Aorta (tissue), 5 donors: ENCODE measurements at regions of chrX and their contacts with region 1.

Region 1: DNA sequence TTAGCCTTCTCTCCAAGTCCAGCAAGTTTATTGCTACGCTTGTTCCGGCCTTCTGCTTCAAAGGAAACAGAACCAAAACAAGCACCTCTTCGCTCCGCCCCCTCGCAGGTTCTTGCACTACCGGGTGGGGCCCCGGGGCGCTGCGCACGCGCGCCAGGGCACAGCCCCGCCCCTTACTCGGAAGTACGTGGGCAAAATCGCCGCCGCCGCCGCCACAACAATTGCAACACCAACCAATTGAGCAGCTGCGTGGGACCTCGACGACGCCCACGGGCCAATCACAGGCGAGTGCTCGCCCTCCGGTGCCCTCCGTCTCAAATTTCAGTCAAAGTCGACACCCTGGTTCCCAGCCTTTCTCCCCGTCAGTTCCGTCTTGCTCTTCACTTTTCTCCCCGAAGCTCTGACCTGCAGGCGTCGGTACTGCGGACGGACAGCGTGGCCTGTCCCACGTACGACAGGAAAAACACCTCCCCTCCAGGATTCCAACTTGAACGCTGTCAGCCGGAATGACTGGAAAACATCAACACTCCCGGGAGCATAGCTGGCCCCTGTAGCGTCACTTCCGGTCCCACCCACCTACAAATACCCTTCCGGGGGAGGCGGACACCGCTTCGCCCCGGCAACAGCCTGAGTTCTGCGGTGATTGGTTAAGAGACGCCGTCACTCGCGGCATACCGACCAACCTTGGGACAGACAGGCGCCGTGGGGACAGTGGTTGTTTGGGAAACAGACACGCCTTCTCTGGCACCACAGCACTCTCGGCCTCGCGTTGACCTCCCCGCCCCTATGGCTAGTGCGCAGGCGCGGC is 624 bp upstream of the OTUD5 start:
- DNase-seq: peak; percentile 97 to 98
- ATAC-seq: peak; percentile 95
- H3K4me3 ChIP-seq: peak overlapping the region; percentile 61 to 67
- H3K27ac ChIP-seq: peak overlapping the region in 1 of 2 donors; percentile 97
- H3K4me1 ChIP-seq: peaks cover 0 to 2% of the 10 kb centered on the region in 2 donors
- H3K27me3 ChIP-seq: no peaks in the 10 kb centered on the region

Region 2: GRCh38 chrX:48715072-48715471 is 243.0 kb before region 1 on chrX:
- intact Hi-C with region 1: no loop called
- DNase-seq: no peak
- ATAC-seq: no peak
- H3K4me3 ChIP-seq: no peak overlapping the region
- H3K27ac ChIP-seq: no peak overlapping the region
- H3K4me1 ChIP-seq: no peaks in the 10 kb centered on the region
- H3K27me3 ChIP-seq: no peaks in the 10 kb centered on the region

Region 3: GRCh38 chrX:48917139-48918001 is 40.7 kb before region 1 on chrX:
- intact Hi-C with region 1: loop called in 1 of 2 experiments (anchors 5 kb)
- DNase-seq: peak; percentile 92 to 95
- ATAC-seq: peak; percentile 86
- H3K4me3 ChIP-seq: no peak overlapping the region
- H3K27ac ChIP-seq: peak overlapping the region in 1 of 2 donors; percentile 58
- H3K4me1 ChIP-seq: no peaks in the 10 kb centered on the region
- H3K27me3 ChIP-seq: no peaks in the 10 kb centered on the region